ENCODE measurements at regions of chr16 and their contacts with region 1.

Region 1: GRCh38 chr16:74862741-74863244 is 88.2 kb upstream of the FA2H start:
- DNase-seq: peak; percentile 79
- CTCF ChIP-seq: peak; percentile 62

Region 2: DNA sequence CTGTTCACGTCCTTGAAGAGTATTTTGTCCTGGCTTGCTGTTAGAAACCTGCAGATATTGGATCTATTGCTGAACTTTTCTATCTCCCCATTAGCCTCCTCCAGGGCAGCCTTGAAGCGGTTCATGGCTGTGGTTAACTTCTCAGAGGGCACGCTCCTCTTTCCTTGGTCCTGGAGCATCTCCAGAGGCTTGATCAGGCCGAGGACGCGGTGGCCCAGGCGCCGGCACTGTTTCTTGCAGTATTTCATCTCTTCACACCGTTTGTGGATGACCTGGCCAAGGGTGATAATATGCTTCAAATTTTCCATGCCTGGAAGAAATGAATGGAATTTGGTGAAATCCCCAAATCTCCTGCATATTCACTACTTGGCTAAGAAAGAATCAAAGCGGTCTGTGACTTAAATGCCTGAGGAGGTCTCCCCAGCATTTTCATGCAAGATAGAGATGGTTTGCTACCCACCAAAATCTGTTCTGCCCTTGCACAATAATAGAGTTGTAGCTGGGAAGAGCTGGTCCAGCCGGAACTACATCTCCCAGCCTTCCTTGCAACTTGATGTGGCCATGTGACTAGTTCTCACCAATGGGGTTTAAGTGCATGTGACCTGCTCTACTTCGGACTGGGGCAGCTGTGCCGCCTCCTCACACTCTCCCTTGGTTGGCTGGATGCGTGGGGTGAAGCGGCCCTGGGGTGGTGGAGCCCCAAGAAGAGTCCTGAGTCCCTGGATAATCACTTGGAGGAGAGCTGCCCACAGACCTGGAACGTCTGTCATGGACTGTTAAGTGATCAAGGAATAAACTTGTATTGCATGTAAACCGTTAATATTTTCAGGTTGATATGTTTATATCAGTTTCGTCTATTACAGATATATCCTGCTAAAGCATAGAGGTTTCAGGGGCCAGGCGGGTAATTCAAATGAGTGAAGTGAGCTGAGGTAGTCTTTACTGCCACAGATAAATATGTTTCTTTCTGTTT is 167.1 kb before region 1 on chr16:
- CTCF ChIA-PET with region 1: interaction called, 45 read pairs
- POLR2A ChIA-PET with region 1: no interaction called
- DNase-seq: peak; percentile 91
- CTCF ChIP-seq: no peak

Region 3: DNA sequence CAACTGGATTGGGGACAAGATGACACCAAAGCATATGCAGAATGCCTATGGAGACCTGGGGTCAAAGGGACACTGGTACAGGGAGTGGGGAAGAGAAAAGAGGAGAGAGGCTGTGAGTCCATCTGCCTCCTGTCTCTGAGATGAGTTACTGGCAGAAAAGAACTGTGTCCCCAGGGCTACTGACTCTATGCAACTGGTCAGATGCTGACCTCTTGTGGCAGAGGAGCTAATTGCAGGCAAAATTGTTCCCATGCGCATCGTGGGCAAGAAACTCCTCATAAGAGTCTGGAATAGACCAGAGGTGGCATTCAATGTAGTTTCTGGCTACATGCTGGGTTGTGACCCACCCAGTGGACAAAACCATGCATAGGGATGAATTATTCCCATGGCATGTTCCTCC is 136.1 kb before region 1 on chr16:
- CTCF ChIA-PET with region 1: interaction called, 19 read pairs
- POLR2A ChIA-PET with region 1: no interaction called
- DNase-seq: no peak
- CTCF ChIP-seq: peak; percentile 38

Region 4: DNA sequence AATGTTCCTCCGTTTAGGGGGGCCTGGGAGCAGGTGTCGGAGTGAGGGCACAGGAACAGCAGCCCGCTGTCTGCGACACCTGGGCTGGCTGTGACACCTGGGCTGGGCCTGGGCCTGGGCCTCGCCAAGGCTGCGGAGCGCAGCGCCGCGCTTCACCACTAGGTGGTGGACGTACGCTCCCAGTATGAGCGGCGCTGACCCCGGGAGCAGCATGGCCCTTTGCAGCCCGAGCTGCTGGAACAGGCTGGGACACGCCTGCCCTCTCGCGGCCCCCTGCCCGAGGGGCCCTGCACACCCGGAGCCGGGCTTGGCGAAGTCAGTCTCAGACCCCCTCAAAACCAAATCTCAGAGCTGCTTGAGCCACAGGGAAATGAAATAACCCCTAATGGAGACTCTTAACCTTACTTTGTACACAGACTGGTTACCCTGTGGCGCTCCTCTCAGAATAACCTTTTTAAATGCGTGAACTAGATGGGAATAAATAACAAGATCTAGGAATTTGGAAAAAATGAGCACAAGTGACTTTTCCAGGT is 49.6 kb before region 1 on chr16:
- CTCF ChIA-PET with region 1: interaction called, 49 read pairs
- POLR2A ChIA-PET with region 1: no interaction called
- DNase-seq: peak; percentile 90
- CTCF ChIP-seq: peak; percentile 90

Region 5: DNA sequence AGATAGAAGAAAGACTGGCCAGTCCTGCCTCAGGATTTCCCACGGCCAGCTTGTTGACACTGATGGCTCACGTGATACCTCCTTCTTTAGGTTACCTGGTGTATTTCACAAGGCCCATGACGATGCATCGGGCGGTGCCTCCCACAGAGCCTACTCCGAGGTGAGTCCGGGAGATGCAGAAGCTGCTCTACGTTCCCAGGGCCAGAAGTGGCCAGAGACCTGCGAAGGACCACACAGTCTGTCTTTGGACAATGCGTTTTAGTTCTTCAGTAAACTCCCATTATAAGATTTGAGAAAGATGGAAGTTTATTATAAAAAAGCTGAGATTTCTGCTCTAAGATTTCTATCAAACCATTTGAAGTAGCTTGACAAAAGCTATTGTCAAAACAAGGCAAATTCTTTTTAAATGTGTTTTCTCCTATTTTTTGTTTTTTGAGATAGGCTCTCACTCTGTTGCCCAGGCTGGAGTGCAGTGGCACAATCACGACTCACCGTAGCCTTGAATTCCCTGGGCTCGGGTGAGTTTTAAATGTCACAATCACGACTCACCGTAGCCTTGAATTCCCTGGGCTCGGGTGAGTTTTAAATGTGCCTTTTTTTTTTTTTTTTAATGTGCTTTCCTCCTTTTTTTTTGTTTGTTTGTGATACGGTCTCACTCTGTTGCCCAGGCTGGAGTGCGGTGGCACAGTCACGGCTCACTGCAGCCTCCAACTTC is 18.9 kb before region 1 on chr16:
- CTCF ChIA-PET with region 1: interaction called, 22 read pairs
- POLR2A ChIA-PET with region 1: no interaction called
- DNase-seq: no peak
- CTCF ChIP-seq: no peak

Region 6: DNA sequence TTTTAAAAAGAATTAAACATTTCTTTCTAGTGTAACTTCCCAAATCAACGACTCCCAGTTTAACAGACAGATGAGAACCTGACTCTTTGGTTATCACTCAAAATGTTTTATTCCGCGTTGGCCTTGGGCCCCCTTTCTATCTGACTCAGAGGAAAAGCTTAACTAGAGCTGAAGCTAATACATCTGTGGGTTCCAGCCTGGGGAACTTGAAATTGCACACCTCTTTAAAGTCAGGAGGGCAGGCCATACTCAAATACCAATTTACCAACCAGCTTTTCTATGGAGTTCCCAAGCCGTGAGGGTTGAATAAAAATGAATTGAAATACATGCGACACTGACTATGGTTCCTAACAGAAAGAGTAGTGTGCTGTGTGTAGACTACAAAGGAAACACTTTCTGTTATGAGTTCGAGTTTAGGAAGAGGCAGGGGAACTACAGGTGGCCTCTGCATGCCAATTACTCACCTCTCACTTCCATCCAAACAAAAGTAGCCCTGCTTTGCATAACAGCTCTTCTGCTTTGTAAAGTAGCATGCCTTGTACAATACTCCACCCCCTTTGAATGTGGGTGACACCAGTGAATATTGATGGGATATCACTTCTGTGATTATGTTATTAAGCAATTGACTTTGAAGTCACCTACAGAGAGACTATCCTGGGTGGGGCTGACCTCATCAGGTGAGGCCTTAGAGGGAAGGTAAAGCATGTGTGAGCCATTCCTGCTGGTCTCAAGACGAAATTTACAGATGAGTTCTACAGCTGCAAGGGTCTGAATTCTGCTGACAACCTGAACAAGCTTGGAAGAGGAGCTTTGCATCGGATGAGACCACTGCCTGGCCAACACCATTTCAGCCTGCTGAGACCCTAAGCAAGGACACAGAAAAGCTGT is 30.0 kb after region 1 on chr16:
- CTCF ChIA-PET with region 1: interaction called, 14 read pairs
- POLR2A ChIA-PET with region 1: no interaction called
- DNase-seq: peak; percentile 48
- CTCF ChIP-seq: no peak